MCF 10A (cell line): ENCODE measurements at regions of chr7 and their contacts with region 1.

Region 1: GRCh38 chr7:130426564-130426963 is 14.3 kb downstream of the CEP41 start:
- DNase-seq: no peak
- H3K4me3 Mint-ChIP-seq: no peak overlapping the region
- H3K27ac Mint-ChIP-seq: no peak overlapping the region
- H3K4me1 Mint-ChIP-seq: peaks cover 5% of the 10 kb centered on the region
- H3K27me3 Mint-ChIP-seq: no peaks in the 10 kb centered on the region
- CTCF ChIP-seq: no peak

Region 2: GRCh38 chr7:130440527-130441365 is 14.2 kb after region 1 on chr7 and contains the start of gene CEP41:
- CTCF ChIA-PET with region 1: interaction called, 3 read pairs
- POLR2A ChIA-PET with region 1: interaction called, 10 read pairs
- intact Hi-C with region 1: no loop called
- DNase-seq: peak; percentile 96
- H3K4me3 Mint-ChIP-seq: peak within 1 kb of the TSS; percentile 93
- H3K27ac Mint-ChIP-seq: peak within 1 kb of the TSS; percentile 96
- H3K4me1 Mint-ChIP-seq: peaks cover 6% of the 10 kb centered on the region
- H3K27me3 Mint-ChIP-seq: no peaks in the 10 kb centered on the region
- CTCF ChIP-seq: no peak
- total RNA-seq, gene CEP41: 14.0 and 15.8 TPM in 2 replicates